HEK293T (cell line): ENCODE measurements at regions of chr10 and their contacts with region 1.

Region 1: DNA sequence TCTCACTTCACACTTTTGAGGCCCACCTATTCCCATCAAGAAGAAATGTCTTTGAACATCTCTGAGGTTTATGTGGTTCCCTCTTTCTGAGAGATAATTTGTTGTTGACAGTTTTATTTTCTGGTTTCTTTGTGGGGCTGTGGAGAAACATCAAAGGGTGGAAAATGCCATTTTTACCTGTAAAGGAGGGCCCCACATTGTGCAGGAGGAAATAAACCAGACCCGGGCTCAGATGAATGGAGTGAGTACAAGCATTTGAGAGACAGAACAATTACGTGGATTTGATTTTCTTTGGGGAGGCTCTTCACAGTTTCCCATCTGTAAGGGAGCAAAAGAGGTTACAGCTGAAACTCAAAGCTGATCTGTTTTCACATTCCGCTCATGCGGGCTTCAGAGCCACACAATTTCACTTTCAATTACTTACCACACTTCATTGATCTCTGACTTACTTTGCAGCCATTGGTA is 29.8 kb downstream of the ITPRIP start:
- DNase-seq: no peak

Region 2: GRCh38 chr10:104274762-104275721 is 33.4 kb before region 1 on chr10:
- CTCF ChIA-PET with region 1: interaction called, 11 read pairs
- POLR2A ChIA-PET with region 1: no interaction called
- DNase-seq: peak; percentile 83

Region 3: DNA sequence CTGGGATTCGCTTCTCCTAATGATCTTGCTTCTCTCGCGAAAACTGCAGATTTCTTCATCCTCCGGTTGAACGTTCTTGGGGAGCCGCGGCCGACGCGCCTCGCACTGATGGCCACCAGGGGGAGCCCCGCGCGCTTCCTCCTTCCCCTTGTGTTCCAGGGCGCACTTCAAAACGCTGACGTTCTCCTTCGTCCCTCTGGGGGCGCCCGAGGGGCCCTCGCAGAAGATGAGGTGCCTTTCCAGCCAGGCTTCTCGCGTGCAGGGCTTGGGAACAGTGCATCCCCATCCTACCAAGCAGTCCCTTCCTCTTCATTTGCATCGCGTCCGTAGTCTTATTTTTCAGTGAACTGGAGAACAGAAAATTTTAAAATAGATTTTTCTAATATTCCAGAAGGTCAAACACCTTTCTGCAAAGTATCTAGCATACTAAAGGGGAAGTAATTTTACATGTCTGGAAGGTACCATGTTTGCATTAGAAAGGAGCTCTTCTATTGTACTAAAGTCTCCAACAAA is 17.0 kb before region 1 on chr10:
- CTCF ChIA-PET with region 1: interaction called, 23 read pairs
- POLR2A ChIA-PET with region 1: no interaction called
- DNase-seq: peak; percentile 96

Region 4: DNA sequence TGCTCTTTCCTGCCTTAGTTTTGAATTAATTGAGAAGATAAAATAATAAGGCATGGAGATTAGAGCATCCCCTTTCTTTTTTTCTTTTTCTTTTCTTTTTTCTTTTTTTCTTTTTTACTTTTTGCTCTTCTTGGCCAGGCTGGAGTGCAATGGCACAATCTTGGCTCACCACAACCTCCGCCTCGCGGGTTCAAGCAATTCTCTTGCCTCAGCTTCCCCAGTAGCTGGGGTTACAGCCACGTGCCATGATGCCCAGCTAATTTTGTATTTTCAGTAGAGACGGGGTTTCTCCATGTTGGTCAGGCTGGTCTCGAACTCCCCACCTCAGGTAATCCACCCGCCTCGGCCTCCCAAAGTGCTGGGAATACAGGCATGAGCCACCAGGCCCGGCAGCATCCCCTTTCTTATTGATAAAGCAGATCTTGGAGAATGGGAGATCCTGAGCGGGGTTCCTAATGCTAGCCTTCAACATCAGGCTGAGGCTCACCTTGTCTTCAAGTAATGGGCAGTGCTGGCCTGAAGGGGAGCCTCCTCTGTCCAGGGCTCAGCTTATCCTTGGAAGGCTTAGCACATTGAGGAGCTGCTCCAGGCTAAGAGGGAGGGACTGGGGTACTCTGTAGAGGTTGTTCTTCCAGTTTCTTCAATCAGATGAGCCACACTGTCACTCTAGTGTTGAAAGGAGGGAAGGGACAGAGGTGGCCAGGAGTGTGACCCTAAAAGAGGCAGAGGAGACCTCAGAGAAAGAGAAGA is 11.6 kb before region 1 on chr10:
- CTCF ChIA-PET with region 1: interaction called, 23 read pairs
- POLR2A ChIA-PET with region 1: no interaction called
- DNase-seq: no peak

Region 5: DNA sequence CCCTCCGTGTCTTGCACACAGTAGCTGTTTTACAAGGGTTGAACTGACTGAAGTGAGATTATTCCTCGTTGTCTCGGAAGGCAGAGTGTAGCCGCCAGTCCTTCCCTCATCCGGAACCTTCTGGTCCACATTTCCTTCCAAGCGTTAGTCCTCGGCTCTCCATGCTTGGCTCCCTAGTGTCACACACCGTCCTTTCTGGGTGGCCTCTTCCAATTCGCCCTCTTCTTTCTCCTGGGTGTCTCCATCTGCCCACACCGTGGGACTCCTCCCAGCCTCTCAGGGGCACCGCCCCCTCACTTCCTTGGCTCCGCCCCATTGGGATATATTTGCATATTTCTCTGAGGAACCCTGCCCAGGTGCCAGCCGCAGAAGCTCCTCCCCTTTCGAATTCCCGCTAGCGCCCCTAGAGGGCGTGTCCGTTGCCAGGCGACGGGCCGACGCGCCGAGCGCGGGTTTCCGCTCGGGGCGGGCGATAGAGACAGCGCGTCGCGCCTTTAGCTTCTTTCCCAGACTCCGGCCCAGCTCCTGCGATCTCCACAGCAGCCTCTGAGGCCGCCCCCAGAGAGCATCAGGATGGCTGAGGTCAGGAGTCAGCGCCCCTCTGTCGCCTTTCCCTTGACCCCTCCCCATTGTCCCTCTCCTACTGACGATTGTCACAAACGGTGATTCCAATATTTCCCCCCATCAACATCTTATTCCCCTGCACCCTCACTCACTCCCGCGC is 45.0 kb after region 1 on chr10 and contains the start of gene CFAP58:
- CTCF ChIA-PET with region 1: interaction called, 29 read pairs
- POLR2A ChIA-PET with region 1: interaction called, 3 read pairs
- DNase-seq: peak; percentile 99

Region 6: GRCh38 chr10:104509981-104510380 is 201.5 kb after region 1 on chr10:
- CTCF ChIA-PET with region 1: no interaction called
- POLR2A ChIA-PET with region 1: no interaction called
- DNase-seq: no peak